Activated CD4-positive, alpha-beta T cell treated with anti-CD3 and anti-CD28 coated beads for 36 hours (primary cell): ENCODE measurements at regions of chr5 and their contacts with region 1.

Region 1: DNA sequence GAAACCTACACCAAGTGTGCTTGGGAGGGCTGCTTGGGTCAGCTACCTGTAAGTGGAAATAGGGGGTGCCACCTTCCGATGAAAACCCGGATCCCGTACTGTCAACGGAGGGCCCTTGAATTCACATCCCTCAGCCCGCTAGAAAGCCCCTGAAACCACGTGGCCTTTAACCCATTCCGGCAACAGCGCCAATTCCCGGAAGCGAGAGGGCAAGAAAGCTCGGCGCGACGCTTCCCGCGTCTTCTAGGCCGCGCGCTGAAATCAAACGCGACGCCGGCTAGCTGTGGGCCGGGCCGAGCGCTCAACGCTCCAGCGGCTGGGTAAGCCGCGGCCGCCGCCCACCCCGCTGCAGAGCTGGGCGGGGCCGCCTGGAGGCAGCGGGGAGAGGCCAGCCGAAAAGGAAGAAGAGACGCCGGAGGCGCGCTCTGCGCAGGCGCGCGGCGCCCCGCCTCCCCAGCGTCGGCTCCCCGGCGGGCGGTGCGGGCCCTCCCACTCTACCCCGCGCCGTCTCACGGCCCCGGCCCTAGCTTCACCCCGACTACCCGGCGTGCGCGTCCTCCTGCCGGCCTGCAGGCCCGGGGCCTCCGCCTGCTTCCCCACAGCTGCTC is at the start of gene KIF2A:
- DNase-seq: peak; percentile 96
- ATAC-seq: peak; percentile 89
- H3K4me3 Mint-ChIP-seq: peak within 1 kb of the TSS; percentile 94
- H3K27ac Mint-ChIP-seq: peak within 1 kb of the TSS; percentile 99
- H3K4me1 Mint-ChIP-seq: peaks cover 54% of the 10 kb centered on the region
- H3K27me3 Mint-ChIP-seq: no peaks in the 10 kb centered on the region
- total RNA-seq, gene KIF2A: 224 to 306 TPM

Region 2: DNA sequence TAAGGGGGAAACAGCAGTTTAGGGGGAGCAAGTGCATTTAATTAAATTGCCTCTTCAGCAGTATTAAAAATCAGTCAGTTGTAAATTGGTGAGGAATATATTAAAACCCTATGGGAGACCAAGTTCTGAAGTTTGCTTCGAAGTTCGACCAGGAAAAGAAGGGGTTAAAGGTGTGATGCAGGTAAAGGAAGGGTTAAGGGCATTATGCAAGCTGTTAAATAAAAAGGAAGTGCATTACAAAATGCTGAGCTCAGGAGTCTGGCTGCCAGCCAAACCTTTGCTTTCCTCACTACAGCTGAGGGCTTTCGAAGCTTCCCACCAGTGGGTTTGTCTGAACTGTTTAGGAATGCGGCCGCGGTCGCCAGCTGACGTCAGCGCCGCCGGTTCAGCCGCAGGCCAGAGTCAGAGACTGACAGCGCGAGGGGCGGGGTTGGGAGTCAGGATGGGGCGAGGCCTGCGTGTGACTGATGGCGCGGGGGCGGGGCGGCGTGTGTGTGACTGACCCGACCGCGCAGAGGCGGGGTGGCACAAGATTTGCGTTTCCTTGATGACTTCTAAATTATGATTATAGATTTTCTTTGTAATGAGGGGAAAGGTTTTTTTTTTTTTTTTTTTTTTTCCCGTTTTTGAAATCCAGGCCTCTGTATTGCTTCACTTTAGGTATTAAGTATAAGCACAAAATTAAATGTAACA is 897.2 kb before region 1 on chr5:
- CTCF ChIA-PET with region 1: no interaction called
- POLR2A ChIA-PET with region 1: no interaction called
- intact Hi-C with region 1: loop called in 1 of 2 experiments (anchors 10 kb)
- DNase-seq: peak; percentile 99
- ATAC-seq: peak; percentile 99
- H3K4me3 Mint-ChIP-seq: peak overlapping the region; percentile 59
- H3K27ac Mint-ChIP-seq: peak overlapping the region; percentile 51
- H3K4me1 Mint-ChIP-seq: peaks cover 31% of the 10 kb centered on the region
- H3K27me3 Mint-ChIP-seq: no peaks in the 10 kb centered on the region

Region 3: DNA sequence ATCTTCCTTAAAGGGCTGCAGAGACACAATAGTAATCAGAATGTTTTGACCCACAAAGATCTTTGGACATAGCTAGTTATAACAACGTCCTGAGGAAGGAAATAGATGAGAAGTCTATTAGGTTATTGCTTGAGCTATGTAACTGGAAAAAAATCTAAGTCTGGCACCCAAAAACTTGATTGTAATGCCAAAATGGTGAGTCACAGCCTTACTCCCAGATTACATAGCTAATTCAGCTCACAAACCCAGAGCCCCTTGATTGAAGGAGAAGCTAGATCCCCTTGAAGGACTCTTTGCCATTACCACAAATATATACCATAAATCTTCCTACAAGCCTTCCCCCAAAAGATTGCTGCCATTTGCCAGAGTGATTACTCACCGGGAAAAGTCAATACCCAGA is 341.6 kb before region 1 on chr5:
- CTCF ChIA-PET with region 1: no interaction called
- POLR2A ChIA-PET with region 1: no interaction called
- intact Hi-C with region 1: no loop called
- DNase-seq: no peak
- ATAC-seq: no peak
- H3K4me3 Mint-ChIP-seq: no peak overlapping the region
- H3K27ac Mint-ChIP-seq: no peak overlapping the region
- H3K4me1 Mint-ChIP-seq: no peaks in the 10 kb centered on the region
- H3K27me3 Mint-ChIP-seq: no peaks in the 10 kb centered on the region

Region 4: DNA sequence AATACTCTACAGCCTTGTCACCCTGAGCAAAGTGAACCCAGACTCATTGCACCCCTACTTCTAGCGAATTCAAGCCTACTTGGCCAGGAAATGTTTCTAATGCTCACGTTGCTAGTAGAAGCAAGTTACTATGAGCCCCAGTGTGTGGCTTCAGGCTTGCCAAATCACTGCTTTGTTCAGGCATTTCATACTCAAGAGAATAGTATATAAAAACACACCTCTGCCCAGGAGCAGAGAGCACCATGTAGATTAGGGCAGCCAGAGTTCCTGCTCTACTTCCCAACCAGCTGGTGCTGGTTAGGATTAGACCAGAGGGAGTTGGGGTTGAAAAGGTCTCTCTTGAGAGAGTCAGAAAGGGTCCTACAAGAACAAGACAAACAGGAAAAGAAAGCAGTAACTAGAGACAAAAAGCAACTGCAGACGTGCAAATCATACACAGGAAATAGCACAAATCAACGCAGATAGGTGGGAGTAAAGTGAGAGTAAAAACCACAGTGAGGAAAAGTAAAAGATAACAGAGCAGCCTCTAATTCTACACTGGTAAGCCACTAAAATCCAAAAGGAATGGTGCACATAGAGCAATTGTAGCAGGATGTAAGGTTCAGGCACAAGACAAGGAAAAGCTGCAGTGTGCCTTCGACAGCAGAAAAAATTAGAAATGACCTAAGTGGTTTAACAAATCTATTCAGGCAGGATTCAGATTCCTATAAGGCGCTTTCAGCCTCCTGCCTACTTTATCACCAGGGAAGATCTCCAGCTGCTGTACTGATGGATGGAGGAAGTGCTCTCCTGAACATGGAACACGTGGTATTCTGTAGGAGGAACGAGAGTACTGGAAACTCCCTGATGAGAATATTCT is 49.4 kb before region 1 on chr5:
- CTCF ChIA-PET with region 1: no interaction called
- POLR2A ChIA-PET with region 1: no interaction called
- intact Hi-C with region 1: loop called (anchors 2 to 5 kb)
- DNase-seq: peak; percentile 38
- ATAC-seq: peak; percentile 73
- H3K4me3 Mint-ChIP-seq: peak overlapping the region; percentile 37
- H3K27ac Mint-ChIP-seq: peak overlapping the region; percentile 93
- H3K4me1 Mint-ChIP-seq: peaks cover 84% of the 10 kb centered on the region
- H3K27me3 Mint-ChIP-seq: no peaks in the 10 kb centered on the region

Region 5: GRCh38 chr5:62284946-62285891 is 20.6 kb before region 1 on chr5:
- CTCF ChIA-PET with region 1: interaction called, 16 read pairs
- POLR2A ChIA-PET with region 1: interaction called, 20 read pairs
- intact Hi-C with region 1: loop called (anchors 1 kb)
- DNase-seq: peak; percentile 84
- ATAC-seq: peak; percentile 84
- H3K4me3 Mint-ChIP-seq: peak overlapping the region; percentile 35
- H3K27ac Mint-ChIP-seq: peak overlapping the region; percentile 96
- H3K4me1 Mint-ChIP-seq: peaks cover 79% of the 10 kb centered on the region
- H3K27me3 Mint-ChIP-seq: no peaks in the 10 kb centered on the region

Region 6: DNA sequence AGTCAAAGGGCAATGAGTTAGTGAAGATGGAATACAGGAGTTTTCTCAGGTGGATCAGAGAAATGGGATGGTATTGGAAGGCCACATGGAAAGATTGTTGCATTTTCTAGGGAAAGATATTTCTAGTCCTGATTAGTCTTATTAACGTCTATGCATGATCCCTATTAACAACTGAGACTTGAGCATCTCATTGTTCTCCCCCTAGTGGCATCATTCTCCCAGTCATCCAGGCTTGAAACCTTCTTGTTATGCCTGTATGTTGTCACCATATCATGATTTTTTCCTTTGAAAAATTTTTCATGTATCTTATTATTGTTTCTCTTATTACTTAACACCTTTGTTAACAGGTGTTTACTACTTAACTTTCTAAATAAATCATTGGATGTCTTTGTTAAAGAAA is 34.6 kb after region 1 on chr5:
- CTCF ChIA-PET with region 1: no interaction called
- POLR2A ChIA-PET with region 1: interaction called, 4 read pairs
- intact Hi-C with region 1: loop called (anchors 2 kb)
- DNase-seq: no peak
- ATAC-seq: no peak
- H3K4me3 Mint-ChIP-seq: no peak overlapping the region
- H3K27ac Mint-ChIP-seq: no peak overlapping the region
- H3K4me1 Mint-ChIP-seq: peaks cover 54% of the 10 kb centered on the region
- H3K27me3 Mint-ChIP-seq: no peaks in the 10 kb centered on the region

Region 7: GRCh38 chr5:62403434-62404250 is 97.8 kb after region 1 on chr5 and contains the start of gene DIMT1:
- CTCF ChIA-PET with region 1: no interaction called
- POLR2A ChIA-PET with region 1: interaction called, 23 read pairs
- intact Hi-C with region 1: loop called (anchors 1 to 2 kb)
- DNase-seq: peak; percentile 97
- ATAC-seq: peak; percentile 99
- H3K4me3 Mint-ChIP-seq: peak within 1 kb of the TSS; percentile 95
- H3K27ac Mint-ChIP-seq: peak within 1 kb of the TSS; percentile 97
- H3K4me1 Mint-ChIP-seq: peaks cover 29% of the 10 kb centered on the region
- H3K27me3 Mint-ChIP-seq: no peaks in the 10 kb centered on the region
- total RNA-seq, gene DIMT1: 38.9 to 52.2 TPM

Region 8: DNA sequence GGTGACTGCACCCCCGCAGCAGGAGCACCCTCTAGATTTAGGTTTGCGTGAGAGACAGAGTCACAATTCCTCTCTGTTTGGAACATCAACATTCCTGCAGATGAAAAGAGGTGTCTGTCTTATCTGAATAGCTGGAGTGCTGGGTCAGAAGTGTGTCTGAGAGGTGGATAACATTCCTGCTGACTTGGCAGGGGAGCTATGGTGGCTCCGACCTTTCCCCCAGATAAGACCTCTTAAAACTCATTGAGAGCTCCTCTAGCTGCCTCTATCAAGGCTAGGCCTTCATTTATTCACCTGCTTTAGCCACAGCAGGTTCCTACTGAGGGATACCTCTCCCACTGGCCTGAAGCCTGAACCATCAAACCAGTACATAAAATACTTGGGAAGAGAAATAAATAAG is 888.3 kb after region 1 on chr5:
- CTCF ChIA-PET with region 1: no interaction called
- POLR2A ChIA-PET with region 1: no interaction called
- intact Hi-C with region 1: no loop called
- DNase-seq: no peak
- ATAC-seq: no peak
- H3K4me3 Mint-ChIP-seq: no peak overlapping the region
- H3K27ac Mint-ChIP-seq: no peak overlapping the region
- H3K4me1 Mint-ChIP-seq: no peaks in the 10 kb centered on the region
- H3K27me3 Mint-ChIP-seq: no peaks in the 10 kb centered on the region